ENCODE measurements at regions of chr1 and their contacts with region 1.

Region 1: GRCh38 chr1:45011837-45012638 is at the start of gene UROD:
- DNase-seq: peak; percentile 86
- ATAC-seq: peak; percentile 71
- H3K4me3 Mint-ChIP-seq: peak within 1 kb of the TSS; percentile 89
- H3K27ac Mint-ChIP-seq: peak within 1 kb of the TSS; percentile 97
- H3K4me1 Mint-ChIP-seq: peaks cover 29% of the 10 kb centered on the region
- H3K27me3 Mint-ChIP-seq: no peaks in the 10 kb centered on the region
- total RNA-seq, gene UROD: 71.7 to 79.2 TPM

Region 2: DNA sequence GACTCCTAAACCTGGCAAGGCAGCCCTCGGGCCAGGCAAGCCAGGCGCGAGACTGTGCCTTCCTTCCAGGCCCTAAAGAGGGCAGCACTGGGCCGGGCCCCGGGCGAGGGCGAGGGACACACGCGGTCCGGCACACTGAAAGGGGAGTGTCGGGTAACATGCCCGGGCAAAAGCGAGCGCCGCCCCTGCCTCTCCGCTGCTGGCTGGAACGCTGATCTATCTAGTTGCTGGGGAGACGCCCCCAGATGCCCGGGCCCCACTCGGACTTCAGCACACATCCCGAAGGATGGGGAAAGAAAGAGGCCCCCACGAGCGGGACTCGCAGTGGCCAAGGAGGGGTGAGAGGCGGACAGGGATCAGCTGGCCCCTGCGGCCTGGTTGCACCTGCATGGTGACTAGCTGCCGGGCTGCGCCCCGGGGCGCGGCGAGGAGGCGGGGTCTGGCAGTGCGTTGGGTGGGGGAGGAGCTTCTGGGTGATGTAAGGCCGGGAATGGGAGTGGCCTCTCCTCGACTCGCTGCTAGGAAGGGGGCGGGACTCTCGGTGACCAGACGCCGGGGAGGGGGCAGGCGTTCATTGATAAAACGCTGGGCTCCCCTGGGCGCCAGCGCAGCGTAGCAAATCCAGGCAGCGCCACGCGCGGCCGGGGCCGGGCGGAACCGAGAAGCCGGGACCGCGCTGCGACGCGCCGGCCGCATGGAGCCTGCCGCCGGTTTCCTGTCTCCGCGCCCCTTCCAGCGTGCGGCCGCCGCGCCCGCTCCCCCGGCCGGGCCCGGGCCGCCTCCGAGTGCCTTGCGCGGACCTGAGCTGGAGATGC is 212.1 kb before region 1 on chr1 and contains the start of gene PLK3:
- POLR2A ChIA-PET with region 1: interaction called, 38 read pairs
- DNase-seq: peak; percentile 96
- ATAC-seq: peak; percentile 77
- H3K4me3 Mint-ChIP-seq: peak within 1 kb of the TSS; percentile 92
- H3K27ac Mint-ChIP-seq: peak within 1 kb of the TSS; percentile 97
- H3K4me1 Mint-ChIP-seq: peaks cover 24% of the 10 kb centered on the region
- H3K27me3 Mint-ChIP-seq: no peaks in the 10 kb centered on the region
- total RNA-seq, gene PLK3: 68.8 to 70.7 TPM

Region 3: DNA sequence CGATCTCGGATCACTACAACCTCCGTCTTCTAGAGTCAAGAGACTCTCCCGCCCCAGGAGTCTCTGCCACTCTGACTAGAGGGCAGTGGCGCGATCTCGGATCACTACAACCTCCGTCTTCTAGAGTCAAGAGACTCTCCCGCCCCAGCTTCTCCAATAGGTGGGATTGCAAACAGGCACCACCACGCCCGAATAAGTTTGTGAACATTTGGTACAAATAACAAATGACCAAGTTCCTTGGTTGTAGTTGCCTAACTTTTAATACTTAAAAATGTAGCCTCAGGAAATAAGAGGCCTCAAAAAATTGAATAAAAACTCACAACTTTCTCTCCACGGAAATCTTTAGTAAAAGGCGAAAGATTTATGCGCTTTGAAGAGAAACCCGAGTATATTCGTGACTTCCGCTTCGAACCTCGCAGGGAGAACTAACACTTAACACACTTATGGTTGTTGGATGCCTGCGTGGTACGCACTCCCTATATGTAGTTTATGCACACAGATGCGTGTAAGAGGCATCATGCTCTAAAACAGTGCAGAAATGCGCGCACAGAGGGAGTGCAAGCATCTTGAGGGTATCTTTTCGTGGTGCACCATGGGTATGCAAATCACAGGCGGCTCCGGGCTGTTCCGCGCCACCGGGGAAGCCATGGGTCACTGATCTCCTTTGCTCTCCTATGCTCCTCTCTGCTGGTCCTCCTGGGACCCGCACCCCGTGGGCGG is 192.3 kb before region 1 on chr1:
- POLR2A ChIA-PET with region 1: interaction called, 47 read pairs
- DNase-seq: peak; percentile 84
- ATAC-seq: peak; percentile 88
- H3K4me3 Mint-ChIP-seq: peak overlapping the region; percentile 92
- H3K27ac Mint-ChIP-seq: peak overlapping the region; percentile 99
- H3K4me1 Mint-ChIP-seq: peaks cover 36% of the 10 kb centered on the region
- H3K27me3 Mint-ChIP-seq: no peaks in the 10 kb centered on the region

Region 4: GRCh38 chr1:44962729-44963128 is 49.3 kb before region 1 on chr1:
- POLR2A ChIA-PET with region 1: no interaction called
- DNase-seq: no peak
- ATAC-seq: no peak
- H3K4me3 Mint-ChIP-seq: no peak overlapping the region
- H3K27ac Mint-ChIP-seq: no peak overlapping the region
- H3K4me1 Mint-ChIP-seq: no peaks in the 10 kb centered on the region
- H3K27me3 Mint-ChIP-seq: no peaks in the 10 kb centered on the region

Region 5: GRCh38 chr1:45303582-45304310 is 291.7 kb after region 1 on chr1:
- POLR2A ChIA-PET with region 1: interaction called, 84 read pairs
- DNase-seq: peak; percentile 96
- ATAC-seq: peak; percentile 86
- H3K4me3 Mint-ChIP-seq: peak overlapping the region; percentile 90
- H3K27ac Mint-ChIP-seq: peak overlapping the region; percentile 96
- H3K4me1 Mint-ChIP-seq: peaks cover 28% of the 10 kb centered on the region
- H3K27me3 Mint-ChIP-seq: no peaks in the 10 kb centered on the region

Region 6: DNA sequence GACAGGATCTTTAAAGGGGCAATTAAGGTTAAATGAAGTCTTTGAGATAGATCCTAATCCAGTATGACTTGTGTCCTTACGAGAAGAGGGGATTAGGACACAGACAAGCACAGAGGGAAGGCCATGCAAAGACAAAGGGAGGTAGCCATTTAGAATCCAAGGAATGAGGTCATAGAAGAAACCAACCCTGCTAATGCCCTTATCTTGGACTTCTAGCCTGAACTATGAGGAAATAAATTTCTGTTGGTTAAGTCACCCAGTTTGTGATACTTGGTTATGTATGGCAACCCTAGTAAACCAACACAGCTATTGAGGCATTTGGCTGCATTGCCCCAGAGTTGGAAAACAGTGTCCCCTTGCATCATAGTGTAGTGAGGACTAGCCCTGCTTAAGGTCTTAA is 912.7 kb after region 1 on chr1:
- POLR2A ChIA-PET with region 1: no interaction called
- DNase-seq: no peak
- ATAC-seq: no peak
- H3K4me3 Mint-ChIP-seq: no peak overlapping the region
- H3K27ac Mint-ChIP-seq: no peak overlapping the region
- H3K4me1 Mint-ChIP-seq: peaks cover 7% of the 10 kb centered on the region
- H3K27me3 Mint-ChIP-seq: no peaks in the 10 kb centered on the region